ENCODE measurements at regions of chr6 and their contacts with region 1.

Region 1: GRCh38 chr6:15441215-15441868 is 195.5 kb downstream of the JARID2 start:
- DNase-seq: peak in 5 of 9 donors; percentile 36 to 55 (median 41)
- ATAC-seq: peak; percentile 74
- H3K4me3 ChIP-seq: no peak overlapping the region
- H3K4me3 Mint-ChIP-seq: peak overlapping the region in 1 of 10 donors; percentile 42
- H3K27ac ChIP-seq: no peak overlapping the region
- H3K27ac Mint-ChIP-seq: peak overlapping the region in 1 of 9 donors; percentile 21
- H3K4me1 ChIP-seq: peaks cover 14 to 20% of the 10 kb centered on the region in 2 donors
- H3K4me1 Mint-ChIP-seq: peaks cover 54 to 88% (median 74%) of the 10 kb centered on the region in 7 donors
- H3K27me3 ChIP-seq: no peaks in the 10 kb centered on the region
- H3K27me3 Mint-ChIP-seq: no peaks in the 10 kb centered on the region

Region 2: GRCh38 chr6:15340775-15341174 is 100.6 kb before region 1 on chr6:
- CTCF ChIA-PET with region 1: no interaction called
- POLR2A ChIA-PET with region 1: no interaction called
- intact Hi-C with region 1: loop called in 1 of 2 experiments (anchors 5 kb)
- DNase-seq: peak in 3 of 9 donors; percentile 24 to 35 (median 31)
- ATAC-seq: peak; percentile 40
- H3K4me3 ChIP-seq: no peak overlapping the region
- H3K4me3 Mint-ChIP-seq: peak overlapping the region; percentile 57 to 83 (median 74)
- H3K27ac ChIP-seq: peak overlapping the region; percentile 61
- H3K27ac Mint-ChIP-seq: peak overlapping the region; percentile 77 to 93 (median 89)
- H3K4me1 ChIP-seq: peaks cover 22 to 50% of the 10 kb centered on the region in 2 donors
- H3K4me1 Mint-ChIP-seq: peaks cover 57 to 99% (median 84%) of the 10 kb centered on the region in 7 donors
- H3K27me3 ChIP-seq: no peaks in the 10 kb centered on the region
- H3K27me3 Mint-ChIP-seq: no peaks in the 10 kb centered on the region

Region 3: GRCh38 chr6:15399641-15400470 is 41.5 kb before region 1 on chr6:
- CTCF ChIA-PET with region 1: no interaction called
- POLR2A ChIA-PET with region 1: no interaction called
- intact Hi-C with region 1: loop called in 1 of 2 experiments (anchors 2 kb)
- DNase-seq: no peak
- ATAC-seq: no peak
- H3K4me3 ChIP-seq: no peak overlapping the region
- H3K4me3 Mint-ChIP-seq: peak overlapping the region; percentile 82 to 95 (median 88)
- H3K27ac ChIP-seq: peak overlapping the region; percentile 34
- H3K27ac Mint-ChIP-seq: peak overlapping the region in 8 of 9 donors; percentile 69 to 90 (median 88)
- H3K4me1 ChIP-seq: peaks cover 17 to 41% of the 10 kb centered on the region in 2 donors
- H3K4me1 Mint-ChIP-seq: peaks cover 54 to 77% (median 69%) of the 10 kb centered on the region in 7 donors
- H3K27me3 ChIP-seq: no peaks in the 10 kb centered on the region
- H3K27me3 Mint-ChIP-seq: no peaks in the 10 kb centered on the region

Region 4: GRCh38 chr6:15420959-15421438 is 20.3 kb before region 1 on chr6:
- CTCF ChIA-PET with region 1: interaction called, 4 read pairs
- POLR2A ChIA-PET with region 1: no interaction called
- intact Hi-C with region 1: loop called in 1 of 2 experiments (anchors 1 kb)
- DNase-seq: peak in 4 of 9 donors; percentile 24 to 41 (median 28)
- ATAC-seq: peak; percentile 80
- H3K4me3 ChIP-seq: peak overlapping the region; percentile 9
- H3K4me3 Mint-ChIP-seq: peak overlapping the region; percentile 3 to 86 (median 69)
- H3K27ac ChIP-seq: peak overlapping the region; percentile 23
- H3K27ac Mint-ChIP-seq: peak overlapping the region; percentile 63 to 93 (median 87)
- H3K4me1 ChIP-seq: peaks cover 17 to 31% of the 10 kb centered on the region in 2 donors
- H3K4me1 Mint-ChIP-seq: peaks cover 37 to 65% (median 57%) of the 10 kb centered on the region in 7 donors
- H3K27me3 ChIP-seq: no peaks in the 10 kb centered on the region
- H3K27me3 Mint-ChIP-seq: no peaks in the 10 kb centered on the region